ENCODE measurements at regions of chr11 and their contacts with region 1.

Region 1: DNA sequence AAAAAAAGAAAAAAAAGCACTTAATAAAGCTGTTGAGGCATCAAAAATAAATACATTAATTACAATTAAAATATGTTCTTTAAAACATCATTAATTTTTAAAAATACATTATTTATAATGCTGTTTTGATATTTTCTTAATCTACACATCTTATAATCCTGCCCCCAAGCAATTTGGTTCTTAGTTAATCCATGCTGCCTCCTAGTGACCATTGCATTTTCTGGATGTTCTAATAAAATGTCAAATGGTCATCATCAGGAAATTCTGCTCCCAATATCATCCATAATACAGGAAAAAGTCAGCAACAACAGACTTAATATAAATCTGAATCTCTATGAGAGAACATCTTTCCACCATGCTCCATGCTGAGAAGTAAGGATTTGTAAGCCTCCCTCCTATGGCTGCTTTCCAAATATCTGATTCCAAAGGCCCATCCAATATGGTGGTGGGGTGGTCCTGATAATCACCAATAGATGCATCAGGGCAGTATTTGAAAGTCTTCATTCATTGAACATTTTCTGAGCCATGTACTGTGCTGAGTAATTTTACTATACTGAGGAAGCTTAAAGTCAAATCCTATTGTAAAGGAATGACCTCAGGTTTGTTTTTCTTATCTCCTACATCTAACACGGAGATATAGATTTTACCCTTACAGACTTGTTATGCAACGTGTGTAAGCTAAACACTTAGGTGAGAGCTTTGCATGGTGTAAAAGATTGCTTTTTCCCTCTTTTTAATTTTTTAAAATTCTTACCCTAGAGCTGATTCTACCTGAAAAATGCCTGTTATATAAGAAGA is 124.7 kb upstream of the BMAL1 start:
- DNase-seq: peak in 1 of 2 donors; percentile 49
- H3K4me3 ChIP-seq: no peak overlapping the region
- H3K27ac ChIP-seq: no peak overlapping the region
- H3K4me1 ChIP-seq: no peaks in the 10 kb centered on the region
- H3K27me3 ChIP-seq: no peaks in the 10 kb centered on the region
- CTCF ChIP-seq: peak in 3 of 7 experiments; percentile 27 to 47 (median 42)
- EP300 ChIP-seq: no peak
- POLR2A ChIP-seq: no peak

Region 2: GRCh38 chr11:12963792-12964536 is 189.0 kb before region 1 on chr11:
- intact Hi-C with region 1: loop called (anchors 10 kb)
- DNase-seq: peak; percentile 79 to 85
- H3K4me3 ChIP-seq: no peak overlapping the region
- H3K27ac ChIP-seq: no peak overlapping the region
- H3K4me1 ChIP-seq: peaks cover 0 to 7% (median 3%) of the 10 kb centered on the region in 4 donors
- H3K27me3 ChIP-seq: peaks cover 0 to 16% (median 0%) of the 10 kb centered on the region in 3 donors
- CTCF ChIP-seq: peak in 5 of 7 experiments; percentile 81 to 93 (median 86)
- EP300 ChIP-seq: no peak
- POLR2A ChIP-seq: no peak